Endothelial cell of umbilical vein (primary cell): ENCODE measurements at regions of chr7 and their contacts with region 1.

Region 1: GRCh38 chr7:158695726-158696452 is 8.7 kb downstream of the NCAPG2 start:
- DNase-seq: peak; percentile 82
- H3K4me3 ChIP-seq: no peak overlapping the region
- H3K27ac ChIP-seq: no peak overlapping the region
- H3K4me1 ChIP-seq: peaks cover 6% of the 10 kb centered on the region
- H3K27me3 ChIP-seq: no peaks in the 10 kb centered on the region
- CTCF ChIP-seq: peak; percentile 63 to 72
- POLR2A ChIP-seq: no peak

Region 2: DNA sequence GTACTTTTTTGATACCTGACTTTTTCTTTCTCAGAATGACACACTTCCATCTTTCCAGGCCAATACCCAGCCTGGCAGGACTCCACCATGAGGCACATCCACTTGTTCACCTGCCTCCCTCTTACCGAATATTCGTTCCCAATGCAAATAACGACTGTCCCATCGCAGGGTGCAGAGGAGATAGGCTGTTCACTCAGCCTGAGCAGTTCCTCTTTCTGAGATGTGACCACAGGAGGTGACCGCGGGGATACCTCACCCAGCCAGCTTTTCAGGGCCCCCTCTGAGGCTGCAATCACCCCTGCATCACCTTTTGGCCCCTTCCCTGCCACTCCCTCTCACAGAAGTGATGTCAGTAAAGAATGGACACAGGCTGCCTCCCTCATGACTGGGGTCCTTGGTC is 136.5 kb before region 1 on chr7:
- CTCF ChIA-PET with region 1: no interaction called
- POLR2A ChIA-PET with region 1: no interaction called
- dilution Hi-C with region 1: no loop called
- intact Hi-C with region 1: no loop called
- DNase-seq: no peak
- H3K4me3 ChIP-seq: no peak overlapping the region
- H3K27ac ChIP-seq: no peak overlapping the region
- H3K4me1 ChIP-seq: no peaks in the 10 kb centered on the region
- H3K27me3 ChIP-seq: no peaks in the 10 kb centered on the region
- CTCF ChIP-seq: no peak
- POLR2A ChIP-seq: no peak

Region 3: DNA sequence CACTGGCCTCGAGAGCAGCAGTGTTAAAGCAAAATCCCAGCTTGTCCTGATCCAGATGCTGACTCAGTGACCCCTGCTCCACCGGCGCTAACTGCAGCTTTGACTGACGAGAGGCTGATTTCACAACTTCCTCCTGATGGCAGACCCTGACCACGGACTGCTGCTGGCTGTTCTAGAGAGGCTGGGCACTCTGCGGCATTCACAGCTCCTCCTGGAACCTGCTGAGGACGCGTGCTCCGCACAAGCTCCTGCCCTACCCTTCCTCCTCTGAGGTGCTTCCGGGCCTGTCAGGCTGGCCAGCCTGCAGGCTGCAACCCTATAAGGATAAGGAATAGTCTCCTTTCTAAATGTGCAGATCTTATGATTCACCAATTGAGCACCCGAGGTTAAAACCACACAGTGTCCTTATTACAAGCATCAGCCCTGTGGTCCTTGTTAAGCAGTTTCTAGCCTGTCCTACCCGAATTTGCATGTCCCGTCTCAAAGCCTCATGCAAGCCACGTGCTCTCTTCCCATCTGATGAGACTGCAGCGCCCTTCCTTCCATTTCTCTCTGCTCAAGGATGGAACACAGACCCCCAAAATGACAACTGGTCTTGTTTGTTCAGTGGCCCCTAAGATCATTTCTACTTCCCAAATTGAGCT is 44.2 kb after region 1 on chr7:
- CTCF ChIA-PET with region 1: interaction called, 39 read pairs
- POLR2A ChIA-PET with region 1: no interaction called
- dilution Hi-C with region 1: no loop called
- intact Hi-C with region 1: no loop called
- DNase-seq: peak; percentile 89
- H3K4me3 ChIP-seq: peak overlapping the region in 1 of 3 experiments; percentile 9
- H3K27ac ChIP-seq: peak overlapping the region; percentile 69
- H3K4me1 ChIP-seq: peaks cover 25% of the 10 kb centered on the region
- H3K27me3 ChIP-seq: no peaks in the 10 kb centered on the region
- CTCF ChIP-seq: no peak
- POLR2A ChIP-seq: no peak

Region 4: DNA sequence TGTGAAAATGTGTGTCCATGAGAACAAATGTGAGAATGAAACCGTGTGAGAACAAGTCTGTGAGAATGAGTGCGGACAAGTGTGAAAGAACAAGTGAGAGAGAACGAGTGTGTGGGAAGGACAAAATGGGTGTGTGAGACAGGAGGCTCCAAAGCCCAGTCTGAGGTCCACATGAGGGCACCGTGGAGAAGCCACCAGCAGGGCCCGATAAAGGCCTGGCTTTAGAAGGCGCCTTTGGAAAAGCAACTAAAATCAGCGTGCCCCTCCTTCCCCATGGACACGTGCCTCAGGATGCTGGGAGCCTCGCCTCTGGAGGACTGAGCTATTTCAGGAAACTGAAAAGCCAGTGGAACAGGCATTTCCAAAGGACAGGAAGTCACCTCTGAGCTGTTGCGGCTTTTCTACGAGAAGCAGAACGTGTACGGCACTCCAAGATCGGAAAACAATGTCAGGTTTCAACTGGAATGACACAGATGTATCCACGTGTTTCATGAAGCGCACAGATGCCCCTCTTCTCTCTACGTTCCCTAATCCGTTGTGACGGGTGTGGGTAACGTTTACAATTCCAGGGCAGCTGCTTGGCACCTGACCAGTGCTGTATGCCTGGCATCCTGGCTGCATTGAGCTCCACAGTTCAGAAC is 87.0 kb after region 1 on chr7:
- CTCF ChIA-PET with region 1: interaction called, 6 read pairs
- POLR2A ChIA-PET with region 1: no interaction called
- dilution Hi-C with region 1: no loop called
- intact Hi-C with region 1: loop called (anchors 1 kb)
- DNase-seq: peak; percentile 80
- H3K4me3 ChIP-seq: no peak overlapping the region
- H3K27ac ChIP-seq: peak overlapping the region; percentile 4
- H3K4me1 ChIP-seq: peaks cover 12% of the 10 kb centered on the region
- H3K27me3 ChIP-seq: no peaks in the 10 kb centered on the region
- CTCF ChIP-seq: peak; percentile 48 to 53
- POLR2A ChIP-seq: no peak

Region 5: DNA sequence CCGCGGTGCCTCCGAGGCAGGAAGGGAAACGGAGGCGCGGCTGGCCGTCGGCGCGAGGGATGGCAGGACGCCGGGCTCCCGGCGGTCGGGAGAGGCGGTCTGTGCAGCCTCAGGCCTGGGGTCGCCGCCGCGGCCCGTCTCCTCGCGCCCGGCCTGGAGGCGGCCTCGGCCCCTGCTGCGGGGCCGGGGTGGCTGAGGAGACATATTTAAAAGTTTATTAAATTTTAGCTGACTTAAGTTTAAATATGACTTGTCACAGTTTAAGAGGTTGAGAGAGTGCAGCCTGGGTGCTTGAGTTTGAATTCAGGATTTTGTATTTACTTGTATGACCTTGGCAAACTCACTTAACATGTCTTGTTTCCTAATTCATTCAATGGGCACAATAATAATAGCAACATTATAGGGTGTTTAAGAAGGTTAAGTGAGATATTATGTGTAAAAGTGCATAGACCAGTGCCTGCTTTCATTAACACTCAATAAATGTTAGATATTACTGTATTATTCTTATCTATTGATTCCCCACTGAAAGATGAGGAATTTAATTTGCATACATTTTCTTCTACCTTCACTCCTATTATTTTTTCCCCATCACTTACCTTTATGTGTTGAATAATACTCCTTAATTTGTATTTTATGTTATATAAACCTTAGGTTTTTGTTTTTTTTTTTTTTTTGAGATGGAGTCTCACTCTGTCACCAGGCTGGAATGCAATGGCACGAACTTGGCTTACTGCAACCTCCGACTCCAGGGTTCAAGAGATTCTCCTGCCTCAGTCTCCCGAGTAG is 161.2 kb after region 1 on chr7:
- CTCF ChIA-PET with region 1: interaction called, 4 read pairs
- POLR2A ChIA-PET with region 1: no interaction called
- dilution Hi-C with region 1: no loop called
- intact Hi-C with region 1: loop called (anchors 2 kb)
- DNase-seq: peak; percentile 19
- H3K4me3 ChIP-seq: peak overlapping the region; percentile 38 to 77 (median 63)
- H3K27ac ChIP-seq: no peak overlapping the region
- H3K4me1 ChIP-seq: peaks cover 12% of the 10 kb centered on the region
- H3K27me3 ChIP-seq: no peaks in the 10 kb centered on the region
- CTCF ChIP-seq: no peak
- POLR2A ChIP-seq: no peak

Region 6: GRCh38 chr7:158885624-158886023 is 189.7 kb after region 1 on chr7:
- CTCF ChIA-PET with region 1: interaction called, 8 read pairs
- POLR2A ChIA-PET with region 1: no interaction called
- dilution Hi-C with region 1: no loop called
- intact Hi-C with region 1: loop called (anchors 1 kb)
- DNase-seq: peak; percentile 21
- H3K4me3 ChIP-seq: no peak overlapping the region
- H3K27ac ChIP-seq: no peak overlapping the region
- H3K4me1 ChIP-seq: no peaks in the 10 kb centered on the region
- H3K27me3 ChIP-seq: no peaks in the 10 kb centered on the region
- CTCF ChIP-seq: peak; percentile 8 to 11
- POLR2A ChIP-seq: no peak